Activated CD4-positive, alpha-beta memory T cell treated with anti-CD3 and anti-CD28 coated beads for 36 hours (primary cell): ENCODE measurements at regions of chr5 and their contacts with region 1.

Region 1: DNA sequence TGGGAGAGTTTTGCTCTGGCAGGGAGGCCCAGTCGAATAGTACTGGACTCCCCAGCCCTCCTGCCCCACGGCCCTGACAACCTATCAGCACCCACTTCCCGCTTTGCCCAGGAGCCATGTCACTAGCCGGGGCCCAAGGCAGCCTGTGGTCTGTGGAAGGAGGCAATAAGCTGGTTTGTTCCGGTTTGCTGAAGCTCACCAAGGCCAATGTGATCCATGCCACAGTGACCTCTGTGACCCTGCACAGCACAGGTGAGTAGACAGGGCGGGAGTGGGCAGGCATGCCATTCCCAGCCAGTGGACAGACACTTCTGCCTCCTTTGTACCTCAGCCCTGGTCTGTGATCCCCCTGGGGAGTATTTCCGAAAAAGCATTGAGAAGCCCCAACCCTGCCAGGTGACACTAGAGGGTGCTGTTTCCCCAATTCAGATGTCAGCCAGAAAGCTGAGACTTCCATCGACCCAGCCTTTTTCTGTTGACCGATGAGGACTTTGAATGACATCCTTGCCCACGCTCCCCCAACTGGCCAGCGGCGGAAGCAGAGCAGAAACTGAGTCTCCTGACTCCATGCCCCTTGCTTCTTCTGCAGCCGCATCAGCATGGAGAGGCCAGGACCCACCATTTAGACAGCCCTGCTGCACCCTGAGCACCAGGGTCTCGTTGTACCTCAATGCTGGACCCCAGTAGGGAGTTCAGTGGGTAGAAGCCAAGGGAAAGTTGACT is 9.6 kb downstream of the PCYOX1L start:
- DNase-seq: peak; percentile 64
- H3K4me3 Mint-ChIP-seq: no peak overlapping the region
- H3K27ac Mint-ChIP-seq: no peak overlapping the region
- H3K4me1 Mint-ChIP-seq: peaks cover 2% of the 10 kb centered on the region
- H3K27me3 Mint-ChIP-seq: no peaks in the 10 kb centered on the region

Region 2: DNA sequence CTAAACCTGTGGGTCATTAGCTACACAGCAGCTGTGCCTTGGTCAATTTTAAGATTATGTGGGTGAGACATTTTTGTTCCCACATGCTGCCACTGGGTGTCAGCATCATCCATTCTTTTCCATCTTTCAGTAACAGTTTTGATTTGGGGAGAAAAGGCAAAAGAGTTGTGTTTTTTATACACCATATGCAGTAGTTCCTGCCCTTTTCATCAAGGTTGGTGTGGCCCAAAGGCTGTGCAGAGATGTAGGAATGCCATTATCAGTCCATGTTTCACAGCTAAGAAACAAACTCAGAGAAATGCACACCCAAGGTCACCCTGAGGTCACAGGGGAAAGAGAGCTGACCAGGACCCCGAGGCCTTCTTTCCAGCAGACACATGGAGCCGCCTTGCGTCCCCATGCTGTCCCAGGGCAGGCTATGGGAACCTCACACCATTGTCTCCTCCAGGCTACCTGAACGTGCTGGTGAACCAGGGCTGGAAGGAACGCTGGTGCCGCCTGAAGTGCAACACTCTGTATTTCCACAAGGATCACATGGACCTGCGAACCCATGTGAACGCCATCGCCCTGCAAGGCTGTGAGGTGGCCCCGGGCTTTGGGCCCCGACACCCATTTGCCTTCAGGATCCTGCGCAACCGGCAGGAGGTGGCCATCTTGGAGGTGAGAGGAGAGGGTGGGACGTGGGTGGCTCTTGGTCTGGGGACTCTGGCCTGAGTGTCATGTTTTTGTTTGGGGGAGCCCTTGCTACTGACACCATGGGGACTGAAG is 49.9 kb before region 1 on chr5:
- CTCF ChIA-PET with region 1: interaction called, 289 read pairs
- POLR2A ChIA-PET with region 1: no interaction called
- intact Hi-C with region 1: loop called (anchors 1 kb)
- DNase-seq: peak; percentile 50
- H3K4me3 Mint-ChIP-seq: no peak overlapping the region
- H3K27ac Mint-ChIP-seq: no peak overlapping the region
- H3K4me1 Mint-ChIP-seq: peaks cover 1% of the 10 kb centered on the region
- H3K27me3 Mint-ChIP-seq: no peaks in the 10 kb centered on the region

Region 3: GRCh38 chr5:149333711-149334443 is 33.5 kb before region 1 on chr5:
- CTCF ChIA-PET with region 1: interaction called, 10 read pairs
- POLR2A ChIA-PET with region 1: no interaction called
- intact Hi-C with region 1: no loop called
- DNase-seq: no peak
- H3K4me3 Mint-ChIP-seq: no peak overlapping the region
- H3K27ac Mint-ChIP-seq: no peak overlapping the region
- H3K4me1 Mint-ChIP-seq: no peaks in the 10 kb centered on the region
- H3K27me3 Mint-ChIP-seq: no peaks in the 10 kb centered on the region

Region 4: GRCh38 chr5:149381987-149382340 is 14.6 kb after region 1 on chr5:
- CTCF ChIA-PET with region 1: interaction called, 44 read pairs
- POLR2A ChIA-PET with region 1: no interaction called
- intact Hi-C with region 1: no loop called
- DNase-seq: peak; percentile 82
- H3K4me3 Mint-ChIP-seq: no peak overlapping the region
- H3K27ac Mint-ChIP-seq: no peak overlapping the region
- H3K4me1 Mint-ChIP-seq: no peaks in the 10 kb centered on the region
- H3K27me3 Mint-ChIP-seq: peaks cover 1% of the 10 kb centered on the region

Region 5: GRCh38 chr5:149561848-149562247 is 194.4 kb after region 1 on chr5:
- CTCF ChIA-PET with region 1: interaction called, 18 read pairs
- POLR2A ChIA-PET with region 1: no interaction called
- intact Hi-C with region 1: loop called (anchors 5 kb)
- DNase-seq: no peak
- H3K4me3 Mint-ChIP-seq: no peak overlapping the region
- H3K27ac Mint-ChIP-seq: peak overlapping the region; percentile 44
- H3K4me1 Mint-ChIP-seq: peaks cover 23% of the 10 kb centered on the region
- H3K27me3 Mint-ChIP-seq: no peaks in the 10 kb centered on the region